BJ (cell line): ENCODE measurements at regions of chr17 and their contacts with region 1.

Region 1: GRCh38 chr17:61862975-61863800 is at the start of gene BRIP1:
- DNase-seq: peak; percentile 71
- H3K4me3 ChIP-seq: peak within 1 kb of the TSS; percentile 72
- H3K27me3 ChIP-seq: no peaks in the 10 kb centered on the region
- CTCF ChIP-seq: no peak
- polyA plus RNA-seq, gene BRIP1: 2.9 and 6.2 TPM in 2 replicates

Region 2: DNA sequence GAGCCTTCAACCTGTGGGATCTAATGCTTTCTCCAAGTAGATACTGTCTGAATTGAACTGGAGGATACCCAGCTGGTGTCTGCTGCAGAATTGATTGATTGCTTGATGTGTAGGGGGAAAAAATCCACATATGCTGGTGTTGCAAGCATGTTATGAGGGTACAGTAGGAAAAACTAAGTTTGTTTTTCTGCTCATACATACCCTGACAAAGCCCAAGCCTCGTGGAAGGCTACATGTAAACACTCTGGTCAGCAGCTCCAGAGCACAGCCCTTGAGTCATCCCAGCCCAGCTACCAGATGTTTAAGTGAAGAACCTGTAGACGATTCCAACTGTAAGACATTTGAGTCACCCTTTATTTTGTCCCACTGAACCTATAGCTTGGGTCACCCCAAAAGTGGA is 1327.7 kb before region 1 on chr17:
- CTCF ChIA-PET with region 1: no interaction called
- POLR2A ChIA-PET with region 1: interaction called, 19 read pairs
- DNase-seq: no peak
- H3K4me3 ChIP-seq: no peak overlapping the region
- H3K27me3 ChIP-seq: no peaks in the 10 kb centered on the region
- CTCF ChIP-seq: no peak

Region 3: DNA sequence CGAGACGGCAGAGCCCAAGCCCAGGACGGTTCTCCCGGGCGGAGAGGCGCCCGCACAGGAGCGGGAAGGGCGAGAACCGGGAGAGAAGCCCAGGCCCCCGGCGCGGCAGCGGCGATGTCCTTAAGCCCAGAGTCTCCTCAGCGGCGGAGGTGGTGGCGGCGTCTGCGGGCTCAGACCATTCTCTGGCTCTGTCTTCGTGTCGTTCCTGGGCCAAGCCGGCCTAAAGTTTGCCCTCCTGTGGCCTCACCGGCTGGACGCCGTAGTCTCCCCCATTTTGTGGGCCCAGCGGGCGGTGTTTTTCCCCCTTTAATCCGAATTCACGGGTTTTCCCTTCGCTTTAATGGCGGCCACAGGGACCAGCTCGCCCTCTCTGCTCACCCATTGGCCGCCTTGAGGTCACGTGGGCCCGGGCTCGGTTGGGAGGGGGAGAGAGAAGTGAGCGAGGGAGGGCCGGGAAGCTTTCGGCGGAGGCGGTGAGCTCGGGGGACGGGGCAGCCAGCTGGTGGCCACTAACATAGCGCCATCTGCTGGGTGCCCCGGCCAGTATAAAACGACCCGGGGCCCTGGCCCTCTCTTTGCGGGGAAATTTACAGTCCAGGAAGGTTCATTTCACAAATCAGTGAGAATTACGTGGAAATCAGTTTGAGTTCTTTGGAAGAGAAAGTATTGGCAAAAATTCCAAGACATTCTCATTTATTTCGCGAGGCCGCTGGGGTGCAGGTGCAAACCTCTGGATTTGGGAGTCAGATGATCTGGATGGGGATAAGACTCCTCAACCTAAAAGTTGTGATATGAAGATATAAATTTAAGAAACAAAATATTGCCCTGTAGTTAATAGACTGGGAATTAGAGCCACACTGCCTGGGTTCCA is 202.6 kb after region 1 on chr17:
- CTCF ChIA-PET with region 1: no interaction called
- POLR2A ChIA-PET with region 1: interaction called, 14 read pairs
- DNase-seq: peak; percentile 74
- H3K4me3 ChIP-seq: peak overlapping the region; percentile 72
- H3K27me3 ChIP-seq: no peaks in the 10 kb centered on the region
- CTCF ChIP-seq: peak; percentile 95